HEK293 (cell line): ENCODE measurements at regions of chr20 and their contacts with region 1.

Region 1: DNA sequence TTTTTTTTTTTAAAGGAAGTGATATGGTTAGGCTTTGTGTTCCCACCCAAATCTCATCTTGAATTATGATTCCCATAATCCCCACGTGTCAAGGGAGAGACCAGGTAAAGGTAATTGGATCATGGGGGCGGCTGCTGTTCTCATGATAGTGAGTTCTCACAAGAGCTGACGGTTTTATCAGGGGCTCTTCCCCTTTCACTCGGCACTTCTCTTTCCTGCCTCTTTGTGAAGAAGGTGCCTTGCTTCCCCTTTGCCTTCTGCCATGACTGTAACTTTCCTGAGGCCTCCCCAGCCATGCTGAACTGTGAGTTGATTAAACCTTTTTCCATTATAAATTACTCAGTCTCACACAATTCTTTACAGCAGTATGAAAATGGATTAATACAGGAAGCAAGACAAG is 64.3 kb downstream of the ZFP64 start:
- H3K4me3 ChIP-seq: no peak overlapping the region
- H3K27ac ChIP-seq: no peak overlapping the region
- H3K4me1 ChIP-seq: no peaks in the 10 kb centered on the region
- CTCF ChIP-seq: no peak

Region 2: DNA sequence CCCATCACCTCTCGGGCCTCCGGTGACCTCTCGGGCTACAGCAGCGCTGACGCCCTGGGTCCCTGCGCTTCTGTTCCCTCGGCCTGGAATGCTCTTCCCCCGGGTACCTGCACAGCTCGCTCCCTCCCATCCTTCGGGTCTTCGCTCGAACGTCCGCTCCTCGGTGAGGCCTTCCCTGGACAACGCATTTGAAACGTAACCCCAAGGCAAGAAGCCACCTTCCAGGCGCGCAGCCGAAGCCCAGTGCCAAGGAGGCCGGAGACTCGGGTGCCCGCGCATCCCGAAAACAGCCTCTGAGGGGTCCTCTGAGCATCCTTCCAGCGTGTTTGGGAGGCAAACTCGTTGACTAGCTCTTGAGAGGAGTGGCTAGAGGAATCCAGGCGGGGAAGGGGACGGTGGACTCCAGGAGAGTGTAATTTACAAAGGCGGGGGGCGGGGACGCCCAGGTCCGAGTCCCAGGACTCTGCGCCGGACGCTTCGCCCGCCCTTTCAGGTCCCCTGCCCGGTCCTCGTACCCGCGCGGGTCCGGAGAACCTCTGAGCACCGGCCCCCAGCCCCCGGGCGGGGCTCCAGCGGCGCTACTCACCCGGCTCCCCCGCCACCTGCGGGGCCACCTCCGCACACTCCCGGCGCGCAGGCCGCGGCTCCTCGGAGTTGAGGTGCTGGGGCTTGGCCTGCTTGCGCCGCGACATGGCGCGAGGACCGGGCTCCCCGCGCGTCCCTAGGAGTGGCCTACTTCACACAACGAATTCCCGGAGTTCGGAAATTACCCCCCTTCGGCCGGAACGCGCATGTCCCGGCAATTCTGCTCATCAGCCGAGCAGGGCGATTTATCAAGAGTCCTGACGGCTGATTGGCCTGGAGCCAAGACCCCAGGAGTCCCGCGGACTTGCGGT is 22.5 kb before region 1 on chr20:
- CTCF ChIA-PET with region 1: interaction called, 10 read pairs
- POLR2A ChIA-PET with region 1: no interaction called
- H3K4me3 ChIP-seq: peak overlapping the region; percentile 53
- H3K27ac ChIP-seq: peak overlapping the region; percentile 93
- H3K4me1 ChIP-seq: no peaks in the 10 kb centered on the region
- CTCF ChIP-seq: no peak

Region 3: GRCh38 chr20:52139986-52140385 is 12.7 kb after region 1 on chr20:
- CTCF ChIA-PET with region 1: interaction called, 15 read pairs
- POLR2A ChIA-PET with region 1: no interaction called
- H3K4me3 ChIP-seq: no peak overlapping the region
- H3K27ac ChIP-seq: no peak overlapping the region
- H3K4me1 ChIP-seq: no peaks in the 10 kb centered on the region
- CTCF ChIP-seq: no peak

Region 4: DNA sequence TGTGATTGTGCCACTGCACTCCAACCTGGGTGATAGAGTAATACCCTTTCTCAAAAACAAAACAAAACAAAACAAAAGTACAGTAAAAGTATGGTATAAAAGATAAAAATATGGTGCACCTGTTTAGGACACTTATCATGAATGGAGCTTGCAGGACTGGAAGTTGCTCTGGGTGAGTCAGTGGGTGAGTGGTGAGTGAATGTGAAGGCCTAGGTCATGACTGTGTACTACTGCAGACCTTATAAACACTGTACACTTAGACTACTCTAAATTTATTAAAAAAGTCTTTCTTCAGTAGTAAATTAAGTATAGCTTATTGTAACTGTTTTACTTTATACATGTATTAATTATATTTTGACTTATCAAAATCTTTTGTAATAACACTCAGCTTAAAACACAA is 18.3 kb after region 1 on chr20:
- CTCF ChIA-PET with region 1: interaction called, 15 read pairs
- POLR2A ChIA-PET with region 1: no interaction called
- H3K4me3 ChIP-seq: no peak overlapping the region
- H3K27ac ChIP-seq: no peak overlapping the region
- H3K4me1 ChIP-seq: no peaks in the 10 kb centered on the region
- CTCF ChIP-seq: no peak

Region 5: GRCh38 chr20:52150440-52151258 is 23.3 kb after region 1 on chr20:
- CTCF ChIA-PET with region 1: interaction called, 15 read pairs
- POLR2A ChIA-PET with region 1: no interaction called
- H3K4me3 ChIP-seq: no peak overlapping the region
- H3K27ac ChIP-seq: no peak overlapping the region
- H3K4me1 ChIP-seq: no peaks in the 10 kb centered on the region
- CTCF ChIP-seq: peak; percentile 48; the same call in 1 of the 2 replicates

Region 6: DNA sequence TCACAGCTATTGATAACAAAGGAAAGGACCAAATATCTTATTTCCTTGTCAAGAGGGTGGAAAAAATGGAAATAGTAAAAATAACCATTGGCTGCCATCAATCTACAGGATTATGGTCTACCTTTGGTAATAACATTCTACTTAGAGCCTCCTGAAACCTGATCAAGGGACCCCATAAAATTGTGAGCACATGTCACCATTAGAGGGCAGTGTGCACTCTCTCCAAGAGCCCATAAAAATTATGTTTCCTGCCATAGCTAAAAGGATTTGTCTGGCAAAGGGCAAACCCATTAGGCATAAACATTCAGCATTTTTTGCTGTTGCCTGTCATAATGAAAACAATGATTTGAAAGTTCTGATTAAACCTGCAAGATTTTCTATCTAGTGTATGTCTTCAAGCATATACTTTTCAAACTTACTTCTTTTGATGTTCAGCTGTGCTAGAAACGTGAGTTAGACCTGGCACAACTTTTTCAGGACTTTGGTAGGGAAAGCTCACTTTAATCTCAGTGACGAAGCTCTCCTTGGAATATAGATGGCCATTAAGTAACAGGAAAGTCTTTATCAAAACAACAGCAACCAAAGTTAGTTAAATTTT is 184.9 kb after region 1 on chr20:
- CTCF ChIA-PET with region 1: no interaction called
- POLR2A ChIA-PET with region 1: no interaction called
- H3K4me3 ChIP-seq: no peak overlapping the region
- H3K27ac ChIP-seq: no peak overlapping the region
- H3K4me1 ChIP-seq: no peaks in the 10 kb centered on the region
- CTCF ChIP-seq: no peak

Region 7: DNA sequence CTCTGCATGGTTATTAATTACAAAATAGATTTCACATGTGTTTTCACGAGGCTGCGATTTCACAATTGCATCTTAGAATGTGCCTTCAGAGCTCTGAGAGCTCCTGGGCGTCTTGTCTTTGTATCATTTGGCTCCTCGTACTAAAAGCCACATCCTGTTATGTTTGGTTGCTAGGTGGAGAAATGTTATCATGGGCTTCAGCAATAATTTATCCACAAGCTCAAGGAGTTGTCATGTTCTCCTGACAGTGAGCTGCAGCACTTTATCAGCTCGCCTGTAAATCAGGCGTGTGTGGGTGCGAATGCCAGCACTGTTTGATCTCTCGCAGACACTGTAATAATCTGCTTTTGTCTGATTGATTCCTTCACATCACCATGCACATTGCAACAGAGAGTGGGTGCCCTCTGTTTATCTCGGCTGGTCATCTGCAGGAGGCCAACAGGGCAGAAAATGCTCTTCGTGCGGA is 282.9 kb after region 1 on chr20:
- CTCF ChIA-PET with region 1: no interaction called
- POLR2A ChIA-PET with region 1: no interaction called
- H3K4me3 ChIP-seq: no peak overlapping the region
- H3K27ac ChIP-seq: no peak overlapping the region
- H3K4me1 ChIP-seq: no peaks in the 10 kb centered on the region
- CTCF ChIP-seq: no peak